Dorsolateral prefrontal cortex (tissue), 120 donors: ENCODE measurements at regions of chr14 and their contacts with region 1.

Region 1: GRCh38 chr14:64220466-64220865 is 73.7 kb downstream of the ESR2 start:
- DNase-seq: peak; percentile 40 to 89 (median 74)
- H3K4me3 ChIP-seq: no peak overlapping the region
- H3K27ac ChIP-seq: peak overlapping the region in 51 of 59 donors; percentile 7 to 82 (median 63)
- H3K27me3 ChIP-seq: no peaks in the 10 kb centered on the region
- CTCF ChIP-seq: no peak

Region 2: GRCh38 chr14:63737582-63738006 is 482.9 kb before region 1 on chr14:
- intact Hi-C with region 1: no loop called
- DNase-seq: no peak
- H3K4me3 ChIP-seq: no peak overlapping the region
- H3K27ac ChIP-seq: no peak overlapping the region
- H3K27me3 ChIP-seq: no peaks in the 10 kb centered on the region
- CTCF ChIP-seq: no peak

Region 3: DNA sequence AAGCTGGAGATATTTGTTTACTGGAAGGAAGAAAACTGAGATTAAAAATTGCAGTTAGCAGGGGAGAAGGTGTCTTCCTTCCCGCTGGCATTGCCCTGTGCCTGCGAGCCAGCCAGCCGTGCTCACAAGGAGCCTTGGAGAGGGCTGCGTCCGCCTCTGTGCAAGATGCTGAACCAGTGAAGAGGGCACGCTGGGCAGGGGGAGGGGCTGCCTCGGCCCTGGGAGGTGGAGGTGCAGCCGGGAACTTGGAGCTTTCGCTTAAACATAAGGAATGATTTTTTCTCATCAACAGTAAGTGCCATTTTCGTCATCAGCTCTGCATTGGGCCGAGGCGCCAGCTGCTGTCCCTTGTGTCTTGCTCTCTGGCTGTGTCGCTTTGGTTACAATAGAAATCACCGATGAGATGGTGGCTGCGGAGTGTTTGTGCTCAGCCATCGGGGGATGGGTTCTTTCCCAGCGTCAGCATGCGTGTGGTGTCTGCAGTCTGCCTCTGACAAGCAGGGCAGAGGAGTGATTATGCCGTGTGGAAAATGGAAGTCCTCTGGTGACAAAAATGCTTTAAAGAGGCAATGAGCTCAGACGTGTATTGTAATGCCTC is 23.6 kb before region 1 on chr14:
- intact Hi-C with region 1: loop called in 1 of 2 experiments (anchors 1 kb)
- DNase-seq: peak; percentile 60 to 89 (median 82)
- H3K4me3 ChIP-seq: peak overlapping the region; percentile 38 to 78 (median 61)
- H3K27ac ChIP-seq: peak overlapping the region in 58 of 59 donors; percentile 18 to 97 (median 87)
- H3K27me3 ChIP-seq: no peaks in the 10 kb centered on the region
- CTCF ChIP-seq: peak in 2 of 56 donors; percentile 12